Activated naive CD4-positive, alpha-beta T cell treated with anti-CD3 and anti-CD28 coated beads for 36 hours (primary cell): ENCODE measurements at regions of chr16 and their contacts with region 1.

Region 1: DNA sequence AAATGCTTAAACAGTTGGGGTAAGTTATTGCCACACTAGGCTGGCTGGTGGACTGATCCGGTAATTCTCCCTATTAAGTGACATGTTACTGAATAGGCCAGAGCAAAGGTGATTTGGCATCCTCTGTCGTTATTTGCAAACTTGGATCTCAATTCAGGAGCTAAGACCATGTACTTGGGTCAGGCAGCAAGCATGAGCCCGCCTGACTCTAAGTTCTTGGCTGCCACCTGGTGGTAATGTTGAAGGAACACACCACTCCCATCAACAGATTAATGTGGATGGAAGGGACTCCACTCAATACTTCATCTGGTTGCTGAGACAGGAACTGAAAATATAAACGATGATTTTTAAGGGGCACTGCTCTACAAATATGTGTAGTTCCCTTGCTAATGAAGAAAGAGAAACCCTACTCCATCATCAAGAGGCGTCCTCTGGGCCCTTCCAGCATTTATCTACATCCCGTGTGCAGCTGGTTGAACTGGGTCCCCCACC is 70.8 kb downstream of the EMP2 start:
- DNase-seq: peak; percentile 78
- H3K4me3 Mint-ChIP-seq: no peak overlapping the region
- H3K27ac Mint-ChIP-seq: no peak overlapping the region
- H3K4me1 Mint-ChIP-seq: peaks cover 15% of the 10 kb centered on the region
- H3K27me3 Mint-ChIP-seq: no peaks in the 10 kb centered on the region

Region 2: GRCh38 chr16:9134739-9135138 is 1374.8 kb before region 1 on chr16:
- CTCF ChIA-PET with region 1: no interaction called
- intact Hi-C with region 1: loop called (anchors 5 kb)
- DNase-seq: peak; percentile 85
- H3K4me3 Mint-ChIP-seq: no peak overlapping the region
- H3K27ac Mint-ChIP-seq: no peak overlapping the region
- H3K4me1 Mint-ChIP-seq: peaks cover 7% of the 10 kb centered on the region
- H3K27me3 Mint-ChIP-seq: peaks cover 4% of the 10 kb centered on the region

Region 3: DNA sequence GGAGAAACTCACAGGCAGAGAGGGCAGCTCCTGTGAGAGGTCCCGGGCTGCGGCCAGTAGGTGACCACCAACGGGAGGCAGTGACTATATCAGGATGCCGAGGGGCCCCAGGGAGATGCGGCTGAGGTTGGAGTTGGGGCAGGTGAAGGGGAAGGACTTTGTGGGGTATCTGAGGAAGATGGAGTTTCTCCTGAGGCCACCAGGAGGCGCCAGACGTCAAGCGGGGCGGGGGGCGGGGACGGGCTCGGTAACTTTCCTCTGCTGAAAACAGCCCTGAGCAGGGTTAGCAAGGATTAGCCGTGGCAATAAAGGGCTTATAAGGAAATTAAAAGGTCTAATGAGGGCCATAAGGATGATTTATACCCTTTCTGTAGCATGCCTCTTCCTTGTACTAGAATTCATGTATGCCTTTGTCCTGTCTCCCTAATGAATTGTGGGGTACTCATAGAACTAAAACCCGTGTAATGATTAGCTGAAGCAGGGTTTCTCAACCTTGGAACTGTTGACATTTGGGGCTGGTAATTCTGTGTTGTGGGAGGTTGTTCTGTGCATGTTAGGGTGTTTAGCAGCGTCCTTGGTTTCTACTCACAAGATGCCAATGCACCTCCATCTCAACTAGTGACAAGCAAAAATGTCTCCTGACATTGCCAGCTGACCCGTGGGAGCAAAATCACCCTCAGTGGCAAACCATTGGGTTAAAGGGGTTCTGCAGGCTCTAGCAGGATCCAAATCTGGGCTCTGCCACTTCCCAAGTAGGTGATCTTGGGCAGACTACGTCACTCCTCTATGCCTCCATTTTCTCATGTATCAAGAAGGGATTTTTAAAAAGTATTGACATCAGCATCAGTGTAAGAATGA is 252.6 kb before region 1 on chr16:
- CTCF ChIA-PET with region 1: interaction called, 18 read pairs
- intact Hi-C with region 1: loop called (anchors 1 kb)
- DNase-seq: peak; percentile 53
- H3K4me3 Mint-ChIP-seq: no peak overlapping the region
- H3K27ac Mint-ChIP-seq: no peak overlapping the region
- H3K4me1 Mint-ChIP-seq: peaks cover 6% of the 10 kb centered on the region
- H3K27me3 Mint-ChIP-seq: peaks cover 5% of the 10 kb centered on the region

Region 4: GRCh38 chr16:10314811-10315210 is 194.8 kb before region 1 on chr16:
- CTCF ChIA-PET with region 1: interaction called, 13 read pairs
- intact Hi-C with region 1: loop called (anchors 1 kb)
- DNase-seq: peak; percentile 16
- H3K4me3 Mint-ChIP-seq: no peak overlapping the region
- H3K27ac Mint-ChIP-seq: no peak overlapping the region
- H3K4me1 Mint-ChIP-seq: peaks cover 11% of the 10 kb centered on the region
- H3K27me3 Mint-ChIP-seq: no peaks in the 10 kb centered on the region

Region 5: DNA sequence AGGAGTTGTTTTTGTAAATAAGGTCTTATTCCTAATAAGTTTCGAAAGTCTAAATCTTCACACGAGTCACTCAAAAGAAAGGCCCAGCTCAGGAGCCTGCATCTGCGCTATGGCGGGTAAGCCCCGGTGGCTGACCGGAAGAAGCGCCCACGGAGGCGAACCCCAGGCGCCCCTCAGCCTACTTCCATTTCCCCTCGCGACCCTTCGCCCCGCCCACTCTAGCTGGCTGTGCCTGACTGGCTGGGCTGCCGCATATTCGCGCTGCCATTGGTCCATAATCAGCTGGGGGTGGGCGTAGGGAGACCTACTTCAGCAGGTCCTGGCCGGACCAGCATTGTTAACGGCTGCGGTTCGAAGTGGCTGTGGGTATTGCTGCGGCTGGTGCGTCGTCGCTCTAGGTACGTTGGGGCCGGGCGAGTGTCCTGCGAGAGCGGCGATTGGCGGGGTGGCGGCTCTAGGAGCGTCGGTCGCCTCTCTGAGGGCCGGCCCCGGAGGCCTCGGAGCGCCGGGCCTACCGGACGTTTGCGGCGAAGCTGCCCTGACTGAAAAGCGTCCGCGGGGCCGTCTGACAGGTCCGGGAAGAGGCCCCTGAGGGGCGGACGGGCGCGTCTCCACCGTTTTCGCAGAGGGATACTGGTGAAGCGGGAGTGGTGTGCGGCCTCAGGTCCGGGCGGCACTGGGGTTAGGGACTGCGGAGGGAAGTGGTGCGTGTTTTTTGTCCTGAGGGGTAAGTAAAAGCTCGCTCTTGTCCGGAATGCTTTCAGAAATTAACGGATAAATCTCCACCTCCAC is 123.7 kb before region 1 on chr16 and contains the start of gene ATF7IP2:
- CTCF ChIA-PET with region 1: interaction called, 6 read pairs
- intact Hi-C with region 1: loop called (anchors 10 kb)
- DNase-seq: peak; percentile 95
- H3K4me3 Mint-ChIP-seq: peak within 1 kb of the TSS; percentile 96
- H3K27ac Mint-ChIP-seq: peak within 1 kb of the TSS; percentile 95
- H3K4me1 Mint-ChIP-seq: peaks cover 37% of the 10 kb centered on the region
- H3K27me3 Mint-ChIP-seq: no peaks in the 10 kb centered on the region
- total RNA-seq, gene ATF7IP2: 17.6 to 18.4 TPM

Region 6: DNA sequence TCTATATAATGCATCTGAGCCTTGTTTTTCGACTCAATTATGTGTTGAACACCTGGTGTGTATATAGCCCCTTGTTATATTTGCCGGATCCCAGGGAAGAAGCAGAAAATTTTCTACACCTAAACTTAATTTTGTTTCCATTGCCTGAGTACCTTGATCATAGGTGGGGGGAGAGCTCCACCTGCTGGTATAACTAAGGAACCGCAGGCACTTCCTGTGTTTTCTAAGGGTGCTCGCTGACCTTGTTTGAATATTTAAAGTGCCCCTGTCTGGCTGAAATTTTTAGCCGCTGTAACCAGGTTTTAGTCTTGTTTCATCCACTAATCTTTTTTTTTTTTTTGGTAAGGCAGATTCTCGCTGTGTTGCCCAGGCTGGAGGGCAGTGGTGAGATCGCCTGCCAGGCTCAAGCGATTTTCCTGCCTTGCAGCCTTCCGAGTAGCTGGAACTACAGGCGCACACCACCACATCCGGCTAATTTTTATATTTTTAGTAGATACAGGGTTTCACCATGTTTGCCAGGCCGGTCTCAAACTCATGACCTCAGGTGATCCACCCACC is 227.6 kb after region 1 on chr16:
- CTCF ChIA-PET with region 1: interaction called, 32 read pairs
- intact Hi-C with region 1: loop called (anchors 1 kb)
- DNase-seq: peak; percentile 80
- H3K4me3 Mint-ChIP-seq: peak overlapping the region; percentile 29
- H3K27ac Mint-ChIP-seq: no peak overlapping the region
- H3K4me1 Mint-ChIP-seq: peaks cover 19% of the 10 kb centered on the region
- H3K27me3 Mint-ChIP-seq: no peaks in the 10 kb centered on the region

Region 7: GRCh38 chr16:10937068-10937859 is 427.7 kb after region 1 on chr16:
- CTCF ChIA-PET with region 1: no interaction called
- intact Hi-C with region 1: loop called (anchors 5 kb)
- DNase-seq: no peak
- H3K4me3 Mint-ChIP-seq: peak overlapping the region; percentile 95
- H3K27ac Mint-ChIP-seq: no peak overlapping the region
- H3K4me1 Mint-ChIP-seq: peaks cover 73% of the 10 kb centered on the region
- H3K27me3 Mint-ChIP-seq: no peaks in the 10 kb centered on the region